ENCODE measurements at regions of chr9 and their contacts with region 1.

Region 1: DNA sequence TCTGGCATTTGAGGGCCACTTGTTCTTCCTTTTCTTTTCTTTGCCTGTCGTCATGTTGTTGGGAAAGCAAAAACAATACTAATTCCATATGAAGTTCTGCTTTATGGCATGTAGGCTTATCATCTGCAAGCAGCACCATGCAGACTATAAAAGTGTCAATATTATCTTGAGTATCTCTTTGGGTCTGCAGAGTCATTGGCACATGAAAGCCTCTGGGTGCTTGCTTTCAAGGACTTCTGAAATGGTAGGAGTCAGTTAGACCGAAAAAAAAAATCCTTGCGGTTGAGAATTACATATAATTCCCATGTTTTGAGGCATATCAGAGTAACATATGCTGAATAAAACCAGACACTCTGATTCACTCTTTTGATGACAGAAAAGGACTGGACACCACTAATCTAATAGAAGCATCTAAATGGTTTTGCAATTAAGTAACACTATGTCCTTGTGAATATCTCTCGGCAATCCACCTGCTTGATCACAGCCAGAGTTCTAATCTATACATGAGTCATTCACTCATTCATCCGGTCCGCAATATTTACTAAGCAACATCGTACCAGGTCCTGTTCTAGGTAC is 44.4 kb downstream of the GNAQ start:
- DNase-seq: no peak
- ATAC-seq: no peak
- H3K4me3 ChIP-seq: no peak overlapping the region
- H3K27ac ChIP-seq: no peak overlapping the region
- H3K4me1 ChIP-seq: peaks cover 0 to 51% (median 11%) of the 10 kb centered on the region in 12 donors
- H3K27me3 ChIP-seq: no peaks in the 10 kb centered on the region
- CTCF ChIP-seq: no peak
- POLR2A ChIP-seq: no peak

Region 2: GRCh38 chr9:77952642-77953328 is 34.4 kb before region 1 on chr9:
- intact Hi-C with region 1: no loop called
- DNase-seq: no peak
- ATAC-seq: peak; percentile 16 to 65 (median 52)
- H3K4me3 ChIP-seq: peak overlapping the region in 1 of 12 donors; percentile 7
- H3K27ac ChIP-seq: peak overlapping the region in 9 of 12 donors; percentile 1 to 64 (median 23)
- H3K4me1 ChIP-seq: peaks cover 0 to 84% (median 41%) of the 10 kb centered on the region in 12 donors
- H3K27me3 ChIP-seq: no peaks in the 10 kb centered on the region
- CTCF ChIP-seq: no peak
- POLR2A ChIP-seq: no peak

Region 3: GRCh38 chr9:78023003-78023741 is 36.0 kb after region 1 on chr9:
- intact Hi-C with region 1: loop called in 1 of 10 experiments (anchors 5 kb)
- DNase-seq: no peak
- ATAC-seq: peak in 3 of 4 donors; percentile 65 to 79 (median 68)
- H3K4me3 ChIP-seq: peak overlapping the region in 5 of 12 donors; percentile 2 to 32 (median 8)
- H3K27ac ChIP-seq: peak overlapping the region in 7 of 12 donors; percentile 1 to 65 (median 52)
- H3K4me1 ChIP-seq: peaks cover 0 to 87% (median 36%) of the 10 kb centered on the region in 12 donors
- H3K27me3 ChIP-seq: no peaks in the 10 kb centered on the region
- CTCF ChIP-seq: no peak
- POLR2A ChIP-seq: no peak

Measured in heart left ventricle (tissue), 16 donors.